Naive thymus-derived CD4-positive, alpha-beta T cell (primary cell): ENCODE measurements at regions of chr18 and their contacts with region 1.

Region 1: GRCh38 chr18:33231474-33232317 is 208.8 kb downstream of the CCDC178 start:
- DNase-seq: peak in 7 of 9 donors; percentile 18 to 50 (median 34)
- ATAC-seq: peak; percentile 66
- H3K4me3 ChIP-seq: no peak overlapping the region
- H3K4me3 Mint-ChIP-seq: peak overlapping the region in 1 of 10 donors; percentile 26
- H3K27ac ChIP-seq: no peak overlapping the region
- H3K27ac Mint-ChIP-seq: peak overlapping the region in 3 of 9 donors; percentile 0 to 79 (median 41)
- H3K4me1 ChIP-seq: no peaks in the 10 kb centered on the region
- H3K4me1 Mint-ChIP-seq: peaks cover 0 to 8% (median 5%) of the 10 kb centered on the region in 7 donors
- H3K27me3 ChIP-seq: no peaks in the 10 kb centered on the region
- H3K27me3 Mint-ChIP-seq: no peaks in the 10 kb centered on the region

Region 2: GRCh38 chr18:33495278-33495677 is 263.6 kb after region 1 on chr18:
- CTCF ChIA-PET with region 1: no interaction called
- POLR2A ChIA-PET with region 1: no interaction called
- intact Hi-C with region 1: loop called in 1 of 2 experiments (anchors 10 kb)
- DNase-seq: no peak
- ATAC-seq: no peak
- H3K4me3 ChIP-seq: no peak overlapping the region
- H3K4me3 Mint-ChIP-seq: no peak overlapping the region
- H3K27ac ChIP-seq: no peak overlapping the region
- H3K27ac Mint-ChIP-seq: no peak overlapping the region
- H3K4me1 ChIP-seq: no peaks in the 10 kb centered on the region
- H3K4me1 Mint-ChIP-seq: no peaks in the 10 kb centered on the region
- H3K27me3 ChIP-seq: no peaks in the 10 kb centered on the region
- H3K27me3 Mint-ChIP-seq: no peaks in the 10 kb centered on the region